Activated CD4-positive, alpha-beta T cell treated with anti-CD3 and anti-CD28 coated beads, Interleukin-2, amount 10 ng/mL, durations not matched to agents 24 days and 14 days (primary cell): ENCODE measurements at regions of chr11 and their contacts with region 1.

Region 1: GRCh38 chr11:43311791-43312607 is at the start of gene API5:
- DNase-seq: peak; percentile 98
- H3K4me3 Mint-ChIP-seq: peak within 1 kb of the TSS; percentile 92
- H3K27ac Mint-ChIP-seq: peak within 1 kb of the TSS; percentile 92
- H3K4me1 Mint-ChIP-seq: peaks cover 33% of the 10 kb centered on the region
- H3K27me3 Mint-ChIP-seq: no peaks in the 10 kb centered on the region
- total RNA-seq, gene API5: 171 and 182 TPM in 2 replicates

Region 2: DNA sequence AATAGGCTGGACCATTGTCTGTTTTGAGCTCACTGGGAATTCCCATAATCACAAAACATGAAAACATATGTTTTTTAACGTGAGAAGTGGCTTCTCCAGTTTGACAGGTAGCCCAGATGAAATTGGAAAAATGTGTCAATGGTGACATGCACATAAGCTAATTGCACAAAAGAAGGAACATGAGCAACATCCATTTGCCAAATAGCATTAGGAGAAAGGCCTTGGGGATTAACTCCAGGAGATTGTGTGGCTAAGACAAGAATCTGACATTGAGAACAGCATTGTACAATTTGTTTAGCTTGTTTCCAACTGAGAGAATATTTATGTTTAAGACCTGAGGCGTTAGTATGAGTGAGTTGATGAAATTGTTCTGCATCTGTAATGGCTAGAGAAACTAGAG is 147.2 kb before region 1 on chr11:
- intact Hi-C with region 1: loop called (anchors 5 kb)
- DNase-seq: no peak
- H3K4me3 Mint-ChIP-seq: no peak overlapping the region
- H3K27ac Mint-ChIP-seq: no peak overlapping the region
- H3K4me1 Mint-ChIP-seq: no peaks in the 10 kb centered on the region
- H3K27me3 Mint-ChIP-seq: no peaks in the 10 kb centered on the region

Region 3: DNA sequence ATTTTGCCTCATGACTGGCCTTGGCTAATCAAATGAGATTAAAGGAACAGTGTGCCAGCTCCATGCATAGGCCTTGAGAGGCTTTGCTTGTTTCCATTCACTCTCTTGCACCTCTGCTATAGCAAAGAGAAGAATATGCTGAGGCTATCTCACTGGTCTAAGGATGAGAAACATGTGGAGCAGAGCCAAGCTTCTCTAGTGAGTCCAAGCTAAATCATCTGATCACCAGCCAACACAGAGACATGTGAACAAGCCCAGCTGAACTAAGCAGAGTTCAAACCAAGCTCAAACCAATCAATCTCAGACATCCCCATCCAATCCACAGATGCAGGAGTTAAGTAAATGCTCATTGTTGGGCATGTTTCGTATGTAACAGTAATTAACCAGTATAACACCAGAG is 69.6 kb before region 1 on chr11:
- intact Hi-C with region 1: no loop called
- DNase-seq: no peak
- H3K4me3 Mint-ChIP-seq: no peak overlapping the region
- H3K27ac Mint-ChIP-seq: no peak overlapping the region
- H3K4me1 Mint-ChIP-seq: no peaks in the 10 kb centered on the region
- H3K27me3 Mint-ChIP-seq: no peaks in the 10 kb centered on the region

Region 4: DNA sequence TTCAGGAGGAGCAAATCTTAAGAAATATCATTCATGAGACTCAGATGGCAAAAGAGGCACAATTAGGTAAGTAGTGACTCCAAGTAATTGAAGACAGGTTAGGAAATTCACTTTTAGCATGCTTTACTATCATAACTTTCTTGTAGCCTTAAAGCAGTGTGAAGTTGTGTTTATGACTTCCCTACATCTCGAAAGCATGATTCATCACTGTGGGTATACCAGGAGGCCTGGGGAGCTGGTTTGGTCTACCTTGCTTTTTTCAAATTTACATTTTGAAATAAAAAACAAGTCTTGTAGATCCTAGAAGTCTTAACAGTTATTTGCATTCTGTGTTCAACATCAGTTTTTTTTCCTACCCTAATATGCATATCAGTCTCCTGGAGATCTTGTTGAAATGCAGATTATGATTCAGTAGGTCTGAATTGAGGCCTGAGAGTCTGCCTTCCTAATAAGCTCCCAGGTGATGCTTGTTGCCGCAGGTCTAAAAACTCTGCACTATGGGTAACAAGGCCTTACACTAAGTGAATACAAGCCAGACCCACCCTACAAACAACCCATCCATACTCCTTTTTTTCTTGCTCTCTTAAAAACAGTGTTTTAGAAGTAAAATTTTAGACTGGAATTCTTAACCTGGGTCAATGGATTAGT is 88.1 kb after region 1 on chr11:
- intact Hi-C with region 1: loop called (anchors 5 kb)
- DNase-seq: no peak
- H3K4me3 Mint-ChIP-seq: no peak overlapping the region
- H3K27ac Mint-ChIP-seq: no peak overlapping the region
- H3K4me1 Mint-ChIP-seq: peaks cover 26% of the 10 kb centered on the region
- H3K27me3 Mint-ChIP-seq: no peaks in the 10 kb centered on the region

Region 5: DNA sequence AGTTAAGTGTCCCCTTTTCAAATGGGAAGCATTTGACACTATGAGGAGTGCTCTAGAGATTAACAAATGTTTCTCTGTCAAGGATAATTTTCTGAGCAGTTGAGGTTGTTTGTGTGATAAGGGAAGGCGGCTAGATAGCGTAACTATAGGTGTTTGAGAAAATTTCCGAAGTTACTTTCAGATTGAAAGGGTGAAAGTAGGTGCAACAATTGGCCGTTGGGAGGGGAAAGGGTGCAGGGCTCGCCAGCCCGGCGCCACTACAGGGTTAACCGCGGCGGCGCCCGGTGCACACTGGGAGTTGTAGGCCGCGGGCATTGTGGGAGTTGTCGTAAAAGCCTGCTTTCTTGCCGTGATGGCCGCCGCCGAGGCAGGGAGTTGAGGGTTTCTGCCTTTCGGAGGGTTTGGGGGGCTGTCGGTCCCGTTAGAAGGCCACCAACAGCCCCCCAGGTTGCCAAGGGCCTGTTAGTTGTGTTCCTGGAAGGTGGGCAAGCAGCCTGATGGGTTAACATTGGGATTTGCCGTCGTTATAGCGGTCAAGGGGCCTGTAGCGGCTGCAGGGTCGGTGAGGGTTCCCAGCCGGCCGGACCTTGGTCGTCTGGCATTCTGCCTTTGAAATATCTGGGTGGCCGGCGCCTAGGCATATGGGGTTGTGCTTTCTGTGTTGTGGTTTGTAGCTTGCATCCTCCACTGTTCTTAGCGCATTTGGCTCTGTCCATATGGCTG is 332.1 kb after region 1 on chr11:
- intact Hi-C with region 1: loop called (anchors 5 kb)
- DNase-seq: peak; percentile 96
- H3K4me3 Mint-ChIP-seq: peak overlapping the region; percentile 94
- H3K27ac Mint-ChIP-seq: peak overlapping the region; percentile 87
- H3K4me1 Mint-ChIP-seq: peaks cover 11% of the 10 kb centered on the region
- H3K27me3 Mint-ChIP-seq: peaks cover 15% of the 10 kb centered on the region

Region 6: GRCh38 chr11:43830928-43831440 is 519.0 kb after region 1 on chr11:
- intact Hi-C with region 1: loop called (anchors 5 kb)
- DNase-seq: peak; percentile 70
- H3K4me3 Mint-ChIP-seq: peak overlapping the region; percentile 12
- H3K27ac Mint-ChIP-seq: peak overlapping the region; percentile 76
- H3K4me1 Mint-ChIP-seq: peaks cover 11% of the 10 kb centered on the region
- H3K27me3 Mint-ChIP-seq: no peaks in the 10 kb centered on the region

Region 7: DNA sequence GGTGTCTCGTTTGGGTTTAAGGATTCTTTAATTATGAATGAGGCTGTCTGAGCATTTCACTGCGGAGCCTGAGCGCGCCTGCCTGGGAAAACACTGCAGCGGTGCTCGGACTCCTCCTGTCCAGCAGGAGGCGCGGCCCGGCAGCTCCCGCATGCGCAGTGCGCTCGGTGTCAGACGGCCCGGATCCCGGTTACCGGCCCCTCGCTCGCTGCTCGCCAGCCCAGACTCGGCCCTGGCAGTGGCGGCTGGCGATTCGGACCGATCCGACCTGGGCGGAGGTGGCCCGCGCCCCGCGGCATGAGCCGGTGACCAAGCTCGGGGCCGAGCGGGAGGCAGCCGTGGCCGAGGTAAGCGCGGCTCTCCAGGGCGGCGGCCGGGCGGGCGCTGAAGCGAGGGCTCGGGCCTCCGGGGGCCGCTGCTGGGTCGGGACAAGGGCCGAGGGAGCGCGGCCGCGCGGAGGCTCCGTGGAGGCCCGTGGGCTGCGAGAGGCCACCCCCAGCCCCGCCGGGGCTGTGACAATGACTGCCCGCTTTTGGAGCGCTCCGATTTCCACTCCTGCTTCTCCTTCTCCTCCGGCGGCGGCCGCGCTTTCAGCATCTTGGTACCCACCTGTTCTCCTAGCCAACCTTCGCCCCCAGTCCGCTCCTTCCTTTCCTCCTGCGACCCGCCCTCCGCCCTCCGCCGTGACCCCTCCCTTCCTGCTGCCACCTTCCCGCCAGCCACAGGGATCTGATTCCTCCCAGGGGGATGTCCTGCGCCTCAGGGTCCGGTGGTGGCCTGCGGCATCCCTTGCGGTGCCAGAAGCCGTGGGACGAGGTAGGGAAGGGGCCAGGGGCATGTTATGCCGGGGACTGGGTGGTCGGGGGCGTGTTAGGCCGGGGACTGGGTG is 783.8 kb after region 1 on chr11 and contains the start of gene EXT2:
- intact Hi-C with region 1: loop called (anchors 10 kb)
- DNase-seq: peak; percentile 96
- H3K4me3 Mint-ChIP-seq: peak within 1 kb of the TSS; percentile 88
- H3K27ac Mint-ChIP-seq: peak within 1 kb of the TSS; percentile 51
- H3K4me1 Mint-ChIP-seq: peaks cover 19% of the 10 kb centered on the region
- H3K27me3 Mint-ChIP-seq: no peaks in the 10 kb centered on the region
- total RNA-seq, gene EXT2: 31.0 and 35.1 TPM in 2 replicates